Activated CD8-positive, alpha-beta memory T cell treated with anti-CD3 and anti-CD28 coated beads, Interleukin-2, amount 10 ng/mL, durations not matched to agents 7 days and 5 days (primary cell): ENCODE measurements at regions of chr16 and their contacts with region 1.

Region 1: GRCh38 chr16:2883027-2883851 is at the start of gene FLYWCH2:
- DNase-seq: peak; percentile 99
- ATAC-seq: peak; percentile 84
- H3K4me3 Mint-ChIP-seq: peak within 1 kb of the TSS; percentile 87
- H3K27ac Mint-ChIP-seq: peak within 1 kb of the TSS; percentile 94
- H3K4me1 Mint-ChIP-seq: peaks cover 17% of the 10 kb centered on the region
- H3K27me3 Mint-ChIP-seq: no peaks in the 10 kb centered on the region
- total RNA-seq, gene FLYWCH2: 19.6 to 19.7 TPM

Region 2: DNA sequence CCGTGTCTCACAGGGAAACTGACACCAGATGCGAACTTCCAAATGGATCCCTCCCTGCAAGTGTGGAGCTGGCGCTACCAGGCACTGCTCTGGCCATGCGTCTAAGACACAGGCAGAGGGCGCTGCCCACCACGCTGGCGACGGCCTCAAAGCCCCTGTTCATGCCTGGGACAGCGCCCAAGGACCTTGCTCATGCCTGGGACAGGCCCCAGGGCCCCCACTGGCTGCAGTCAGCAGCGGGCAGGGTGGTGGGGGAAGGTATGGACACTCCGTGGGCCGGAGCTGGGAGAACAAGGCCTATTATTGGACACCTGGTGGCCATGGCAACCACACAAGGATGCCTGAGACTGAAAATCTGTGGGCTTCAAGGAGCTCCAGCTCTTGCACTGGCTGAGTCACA is 44.3 kb before region 1 on chr16:
- CTCF ChIA-PET with region 1: interaction called, 11 read pairs
- DNase-seq: peak; percentile 74
- ATAC-seq: peak; percentile 82
- H3K4me3 Mint-ChIP-seq: no peak overlapping the region
- H3K27ac Mint-ChIP-seq: no peak overlapping the region
- H3K4me1 Mint-ChIP-seq: peaks cover 24% of the 10 kb centered on the region
- H3K27me3 Mint-ChIP-seq: peaks cover 5% of the 10 kb centered on the region

Region 3: GRCh38 chr16:2905431-2906387 is 22.5 kb after region 1 on chr16:
- CTCF ChIA-PET with region 1: interaction called, 26 read pairs
- DNase-seq: peak; percentile 99
- ATAC-seq: peak; percentile 81
- H3K4me3 Mint-ChIP-seq: peak overlapping the region; percentile 94
- H3K27ac Mint-ChIP-seq: peak overlapping the region; percentile 91
- H3K4me1 Mint-ChIP-seq: peaks cover 22% of the 10 kb centered on the region
- H3K27me3 Mint-ChIP-seq: peaks cover 5% of the 10 kb centered on the region

Region 4: DNA sequence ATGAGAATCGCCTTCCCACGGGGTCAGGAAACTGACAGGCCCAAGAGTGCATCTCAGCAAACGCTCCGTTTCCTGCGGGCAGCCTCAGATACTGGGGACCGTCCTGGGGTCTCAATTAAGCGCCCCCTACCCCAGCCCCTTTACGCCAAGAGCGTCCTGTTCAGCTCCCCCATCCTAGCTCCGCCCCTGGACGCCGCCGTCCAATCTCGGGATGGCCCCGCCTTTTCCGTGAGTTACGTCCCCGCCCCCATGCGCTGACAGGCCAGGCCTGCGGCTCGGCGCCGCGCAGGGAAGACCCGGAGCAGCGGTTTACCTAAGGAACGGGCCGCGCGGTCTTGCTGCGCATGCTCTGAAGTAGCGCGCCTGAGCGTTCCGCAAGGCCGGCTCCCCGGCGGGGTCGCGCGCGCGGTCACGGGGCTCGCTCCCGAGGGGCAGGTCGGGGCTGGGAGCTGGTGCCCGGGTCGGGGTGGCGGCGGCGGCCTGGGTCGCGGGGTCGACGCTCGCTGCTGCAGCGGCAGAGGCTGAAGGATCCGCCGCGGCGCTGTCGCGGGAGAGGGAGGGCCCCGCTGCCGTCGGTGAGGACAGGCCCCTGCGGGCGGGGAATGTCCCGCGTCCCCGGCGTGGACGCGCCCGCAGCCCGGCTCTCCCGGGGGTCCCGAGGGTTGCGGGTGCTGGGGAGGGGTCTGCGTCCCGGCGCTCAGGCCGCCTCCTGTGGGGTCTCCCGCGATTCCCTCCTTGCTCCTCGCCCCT is 28.5 kb after region 1 on chr16 and contains the start of gene FLYWCH1:
- CTCF ChIA-PET with region 1: interaction called, 26 read pairs
- DNase-seq: peak; percentile 99
- ATAC-seq: peak; percentile 95
- H3K4me3 Mint-ChIP-seq: peak within 1 kb of the TSS; percentile 87
- H3K27ac Mint-ChIP-seq: peak within 1 kb of the TSS; percentile 74
- H3K4me1 Mint-ChIP-seq: peaks cover 33% of the 10 kb centered on the region
- H3K27me3 Mint-ChIP-seq: peaks cover 9% of the 10 kb centered on the region
- total RNA-seq, gene FLYWCH1: 52.7 to 58.1 TPM

Region 5: DNA sequence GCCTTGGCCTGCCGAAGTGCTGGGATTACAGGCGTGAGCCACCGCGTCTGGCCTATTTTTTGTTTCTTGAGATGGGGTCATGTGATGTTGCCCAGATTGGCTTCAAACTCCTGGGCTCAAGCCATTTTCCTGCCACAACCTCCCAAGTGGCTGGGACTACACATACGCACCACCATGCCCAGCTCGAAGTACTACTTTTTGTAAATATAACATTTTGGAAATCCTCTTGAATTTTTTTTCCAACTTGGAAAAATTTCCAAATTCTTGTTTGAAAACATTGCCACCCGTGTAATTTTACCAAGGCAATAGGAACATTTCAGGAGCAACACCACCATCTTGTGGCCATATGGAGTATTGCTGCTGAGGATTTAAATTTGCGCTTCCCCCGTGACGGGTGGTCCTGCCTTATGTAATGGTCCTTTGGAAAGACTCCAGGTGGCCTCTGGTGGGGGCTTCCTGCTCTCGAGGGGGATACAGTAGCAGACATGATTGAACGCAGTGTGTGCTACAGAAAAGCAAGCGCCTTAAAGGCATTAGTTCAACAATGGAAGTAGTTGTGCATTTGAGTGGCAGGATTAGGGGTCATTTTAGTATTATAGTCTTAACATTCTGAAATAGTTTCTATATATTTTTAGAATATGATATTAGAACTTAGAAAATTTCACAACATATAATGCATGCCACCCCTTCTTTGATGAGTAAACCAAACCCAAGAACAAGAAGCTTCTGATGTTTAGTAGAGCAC is 36.4 kb after region 1 on chr16:
- CTCF ChIA-PET with region 1: interaction called, 30 read pairs
- DNase-seq: peak; percentile 77
- ATAC-seq: peak; percentile 63
- H3K4me3 Mint-ChIP-seq: no peak overlapping the region
- H3K27ac Mint-ChIP-seq: peak overlapping the region; percentile 54
- H3K4me1 Mint-ChIP-seq: peaks cover 18% of the 10 kb centered on the region
- H3K27me3 Mint-ChIP-seq: no peaks in the 10 kb centered on the region

Region 6: DNA sequence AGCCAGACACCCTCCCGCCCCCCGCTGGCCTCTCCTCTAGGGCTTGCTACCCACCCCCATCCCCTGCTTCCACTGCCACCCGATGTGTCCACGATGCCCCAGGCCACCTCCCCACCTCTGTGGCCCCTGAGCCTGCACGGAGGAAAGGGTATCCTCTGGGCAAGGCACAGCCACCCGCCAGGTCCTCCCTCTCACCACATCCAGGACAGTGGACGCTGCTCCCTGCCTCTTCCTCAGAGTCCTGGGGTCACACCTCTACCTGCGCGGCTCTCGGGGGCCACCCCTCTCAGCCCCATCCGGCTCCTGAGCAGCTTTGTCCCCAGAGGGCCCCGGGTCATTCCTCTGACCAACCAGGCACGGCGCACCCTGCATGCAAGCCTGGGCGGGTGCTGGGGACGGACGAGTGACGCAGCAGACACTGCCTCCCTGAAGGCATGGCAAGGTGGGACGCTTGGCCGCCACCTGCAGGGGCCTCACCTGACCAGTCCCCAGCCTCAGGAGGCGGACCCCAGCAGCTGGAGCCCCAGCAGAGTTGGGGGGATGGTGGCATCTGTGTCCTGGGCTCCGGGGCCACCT is 53.3 kb after region 1 on chr16:
- CTCF ChIA-PET with region 1: no interaction called
- DNase-seq: no peak
- ATAC-seq: no peak
- H3K4me3 Mint-ChIP-seq: no peak overlapping the region
- H3K27ac Mint-ChIP-seq: no peak overlapping the region
- H3K4me1 Mint-ChIP-seq: no peaks in the 10 kb centered on the region
- H3K27me3 Mint-ChIP-seq: no peaks in the 10 kb centered on the region